ENCODE measurements at regions of chr3 and their contacts with region 1.

Region 1: DNA sequence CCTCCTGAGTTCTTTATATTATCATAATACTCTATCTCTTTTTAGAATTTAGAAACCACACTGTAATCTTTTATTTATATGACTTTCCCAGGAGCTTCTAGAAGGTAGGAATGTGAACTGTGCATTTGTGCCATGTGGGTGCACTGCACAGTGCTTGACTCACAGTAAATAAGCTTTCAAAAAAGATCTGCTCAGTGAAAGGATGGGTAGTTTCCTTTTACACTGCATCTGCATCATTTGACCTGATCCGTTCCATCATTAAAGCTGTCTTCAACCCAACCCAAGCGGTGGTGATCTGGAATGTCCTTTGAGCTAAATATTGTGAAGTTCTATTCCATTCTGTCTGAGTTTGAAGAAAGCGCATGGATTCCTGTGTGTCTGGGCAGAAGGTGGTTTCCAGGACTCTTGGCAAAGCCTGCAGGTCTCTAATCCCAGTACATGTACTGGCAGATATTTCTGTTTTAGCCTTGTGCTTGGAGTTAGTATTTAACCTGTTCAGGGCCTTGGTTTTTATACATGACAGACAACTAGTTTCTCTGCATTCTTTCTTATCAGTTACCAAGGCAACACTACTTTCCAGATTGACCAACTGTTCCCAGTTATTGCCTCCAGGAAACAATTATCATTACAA is 96.7 kb downstream of the DHX30 start:
- DNase-seq: no peak
- H3K4me3 ChIP-seq: no peak overlapping the region
- H3K27ac ChIP-seq: no peak overlapping the region
- H3K4me1 ChIP-seq: no peaks in the 10 kb centered on the region
- H3K27me3 ChIP-seq: no peaks in the 10 kb centered on the region
- CTCF ChIP-seq: no peak
- POLR2A ChIP-seq: no peak

Region 2: DNA sequence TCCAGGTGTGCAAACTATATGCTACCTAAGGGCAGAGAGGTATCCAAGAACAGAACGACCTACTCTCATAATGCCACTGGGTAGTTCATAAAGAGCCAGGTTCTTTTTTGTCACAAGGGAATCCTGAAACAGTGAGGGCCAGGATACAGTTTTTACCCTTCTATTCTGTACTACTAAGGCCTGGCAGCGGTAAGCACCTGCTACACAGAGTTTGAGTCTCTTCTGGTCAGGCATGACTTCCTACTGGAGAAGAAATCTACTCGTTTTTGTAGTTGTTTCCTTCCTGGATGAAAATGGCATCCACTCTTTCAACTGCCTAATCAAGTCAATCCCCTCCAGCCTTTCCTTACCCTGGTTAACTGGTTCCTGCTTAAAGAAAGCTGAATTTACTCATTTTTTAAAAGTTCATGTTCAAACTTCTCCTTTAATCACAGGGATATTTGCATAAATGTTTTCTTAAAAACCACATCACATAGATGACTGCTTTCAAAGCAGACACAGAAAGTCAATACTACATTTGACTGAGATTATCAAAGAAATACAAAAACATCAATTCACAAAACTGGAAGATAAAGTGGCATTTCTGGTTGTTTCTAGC is 76.6 kb after region 1 on chr3:
- intact Hi-C with region 1: loop called (anchors 2 kb)
- DNase-seq: no peak
- H3K4me3 ChIP-seq: no peak overlapping the region
- H3K27ac ChIP-seq: no peak overlapping the region
- H3K4me1 ChIP-seq: no peaks in the 10 kb centered on the region
- H3K27me3 ChIP-seq: no peaks in the 10 kb centered on the region
- CTCF ChIP-seq: no peak
- POLR2A ChIP-seq: no peak

Measured in breast epithelium (tissue), 4 donors.